ENCODE measurements at regions of chr20 and their contacts with region 1.

Region 1: GRCh38 chr20:50575847-50576720 is 65.9 kb downstream of the PTPN1 start:
- DNase-seq: peak; percentile 51
- ATAC-seq: peak; percentile 74
- H3K4me3 ChIP-seq: no peak overlapping the region
- H3K27ac ChIP-seq: no peak overlapping the region; the same call in 1 of the 2 replicates
- H3K4me1 ChIP-seq: peaks cover 11% of the 10 kb centered on the region
- H3K27me3 ChIP-seq: no peaks in the 10 kb centered on the region
- CTCF ChIP-seq: peak; percentile 68
- POLR2A ChIP-seq: no peak
- RAD21 ChIP-seq: peak; percentile 85

Region 2: GRCh38 chr20:50484276-50484976 is 91.7 kb before region 1 on chr20:
- CTCF ChIA-PET with region 1: no interaction called
- POLR2A ChIA-PET with region 1: no interaction called
- dilution Hi-C with region 1: no loop called
- in situ Hi-C with region 1: no loop called
- intact Hi-C with region 1: loop called (anchors 5 kb)
- DNase-seq: no peak
- ATAC-seq: no peak
- H3K4me3 ChIP-seq: no peak overlapping the region
- H3K27ac ChIP-seq: peak overlapping the region; percentile 63; the same call in 1 of the 2 replicates
- H3K4me1 ChIP-seq: peaks cover 5% of the 10 kb centered on the region
- H3K27me3 ChIP-seq: no peaks in the 10 kb centered on the region
- CTCF ChIP-seq: peak; percentile 24; the same call in 1 of the 2 replicates
- POLR2A ChIP-seq: no peak
- RAD21 ChIP-seq: no peak

Measured in IMR-90 (cell line).